GM12878 (cell line): ENCODE measurements at regions of chr3 and their contacts with region 1.

Region 1: DNA sequence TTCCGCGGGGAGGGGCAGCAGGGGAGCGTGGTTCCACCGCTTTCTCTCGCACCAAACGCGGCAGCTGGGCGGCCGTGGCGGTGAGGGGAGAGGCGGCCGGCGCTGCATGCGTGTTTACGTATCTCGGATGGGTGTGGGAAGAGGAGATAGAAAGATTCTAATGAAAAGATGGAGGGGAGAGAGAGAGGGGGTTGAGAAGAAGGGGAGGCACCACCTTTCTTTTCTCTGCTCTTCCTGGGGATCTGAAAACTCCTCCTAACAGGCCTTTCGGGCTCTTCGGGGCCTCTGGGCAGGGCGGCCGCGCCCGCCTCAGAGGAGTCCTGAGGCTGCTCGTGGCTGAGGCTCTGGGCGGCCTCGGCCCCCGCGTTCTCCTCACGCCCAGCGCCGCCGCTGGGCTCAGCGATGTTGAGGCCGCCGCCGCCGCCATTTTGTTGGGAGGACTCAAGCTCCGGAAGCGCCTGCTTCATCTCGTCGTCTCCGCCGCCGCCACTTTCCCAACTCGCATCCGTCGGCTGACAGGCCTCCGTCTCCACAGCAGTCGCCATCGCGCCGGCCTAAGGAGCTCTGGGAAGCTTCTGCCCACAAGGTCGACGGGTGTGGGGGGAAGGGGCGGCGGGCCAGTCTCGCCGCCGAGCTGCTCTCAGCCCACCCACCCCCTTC is 473 bp downstream of the TASOR start:
- DNase-seq: peak; percentile 48
- ATAC-seq: peak; percentile 83
- H3K4me3 ChIP-seq: peak overlapping the region; percentile 94
- H3K27ac ChIP-seq: peak overlapping the region; percentile 98
- H3K4me1 ChIP-seq: peaks cover 3% of the 10 kb centered on the region
- H3K27me3 ChIP-seq: no peaks in the 10 kb centered on the region
- CTCF ChIP-seq: no peak
- EP300 ChIP-seq: 0 out of 4 replicates have a peak, but pooled peaks of 1 of the 2 experiments have one; percentile 11
- POLR2A ChIP-seq: peak; percentile 84
- RAD21 ChIP-seq: no peak

Region 2: DNA sequence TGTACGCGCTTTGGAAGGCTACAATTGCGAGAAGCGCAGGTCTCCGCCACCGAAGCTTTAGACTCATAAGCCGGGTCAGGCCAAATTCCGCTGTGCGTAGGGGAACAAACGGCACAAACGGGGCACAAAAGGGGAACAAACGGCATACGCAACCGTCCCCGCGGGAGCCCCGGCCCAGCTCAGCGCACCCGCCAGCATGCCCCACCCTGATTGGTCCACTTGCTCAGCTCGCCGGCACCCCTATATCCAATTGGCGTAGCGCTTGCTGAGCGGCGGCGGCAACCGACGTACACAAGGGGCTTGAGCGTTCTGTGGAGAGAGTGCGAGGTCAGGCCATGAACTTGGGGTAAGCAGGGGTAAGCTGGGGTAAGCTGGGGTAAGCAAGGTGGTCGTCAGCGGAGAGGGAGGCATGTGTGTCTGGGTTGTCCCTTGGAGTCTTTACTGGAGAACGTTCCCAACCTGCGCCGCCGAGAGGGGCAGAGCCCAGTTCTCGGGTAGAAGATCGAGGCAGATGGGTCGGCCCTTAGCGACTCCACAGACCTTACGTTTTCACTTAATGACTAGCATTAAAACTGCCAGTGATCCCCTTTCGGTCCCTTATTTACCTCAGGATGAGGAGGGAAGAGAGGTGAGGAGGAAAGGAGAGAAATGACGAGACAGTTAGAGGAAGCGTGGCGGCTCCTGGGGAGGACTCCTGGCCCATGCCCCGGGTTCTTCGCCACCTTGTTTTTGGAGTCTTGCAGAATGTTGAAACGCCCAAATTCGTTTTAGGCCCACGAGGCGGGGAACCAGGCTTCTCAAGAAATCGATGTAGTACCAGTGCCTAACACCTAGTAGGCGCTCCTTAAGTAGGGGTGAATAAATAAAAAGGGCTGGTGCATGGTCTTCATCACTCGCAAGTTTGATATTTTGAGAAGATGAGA is 125.4 kb before region 1 on chr3 and contains the start of gene CCDC66:
- CTCF ChIA-PET with region 1: no interaction called
- POLR2A ChIA-PET with region 1: interaction called, 6 read pairs
- RAD21 ChIA-PET with region 1: no interaction called
- SMC1A ChIA-PET with region 1: interaction called, 4 read pairs
- in situ Hi-C with region 1: no loop called
- intact Hi-C with region 1: loop called (anchors 2 kb)
- DNase-seq: peak; percentile 82
- ATAC-seq: peak; percentile 99
- H3K4me3 ChIP-seq: peak within 1 kb of the TSS; percentile 80
- H3K27ac ChIP-seq: peak within 1 kb of the TSS; percentile 73
- H3K4me1 ChIP-seq: no peaks in the 10 kb centered on the region
- H3K27me3 ChIP-seq: no peaks in the 10 kb centered on the region
- CTCF ChIP-seq: peak; percentile 74 to 86 (median 84)
- EP300 ChIP-seq: no peak
- POLR2A ChIP-seq: peak; percentile 99
- RAD21 ChIP-seq: peak; percentile 35; the same call in 1 of the 2 replicates
- polyA plus RNA-seq, gene CCDC66: 9.4 to 13.9 TPM

Region 3: GRCh38 chr3:56593455-56594158 is 89.0 kb before region 1 on chr3:
- CTCF ChIA-PET with region 1: no interaction called
- POLR2A ChIA-PET with region 1: no interaction called
- RAD21 ChIA-PET with region 1: no interaction called
- SMC1A ChIA-PET with region 1: no interaction called
- in situ Hi-C with region 1: no loop called
- intact Hi-C with region 1: no loop called
- DNase-seq: no peak
- ATAC-seq: no peak
- H3K4me3 ChIP-seq: no peak overlapping the region
- H3K27ac ChIP-seq: no peak overlapping the region
- H3K4me1 ChIP-seq: no peaks in the 10 kb centered on the region
- H3K27me3 ChIP-seq: no peaks in the 10 kb centered on the region
- CTCF ChIP-seq: no peak
- EP300 ChIP-seq: no peak
- POLR2A ChIP-seq: no peak
- RAD21 ChIP-seq: no peak

Region 4: GRCh38 chr3:56693750-56694149 is 11.2 kb after region 1 on chr3:
- CTCF ChIA-PET with region 1: interaction called, 7 read pairs
- POLR2A ChIA-PET with region 1: interaction called, 7 read pairs
- RAD21 ChIA-PET with region 1: interaction called, 7 read pairs
- SMC1A ChIA-PET with region 1: interaction called, 16 read pairs
- in situ Hi-C with region 1: no loop called
- intact Hi-C with region 1: no loop called
- DNase-seq: no peak
- ATAC-seq: no peak
- H3K4me3 ChIP-seq: no peak overlapping the region
- H3K27ac ChIP-seq: no peak overlapping the region
- H3K4me1 ChIP-seq: peaks cover 12% of the 10 kb centered on the region
- H3K27me3 ChIP-seq: no peaks in the 10 kb centered on the region
- CTCF ChIP-seq: no peak
- EP300 ChIP-seq: no peak
- POLR2A ChIP-seq: no peak
- RAD21 ChIP-seq: no peak